IMR-90 (cell line): ENCODE measurements at regions of chr3 and their contacts with region 1.

Region 1: GRCh38 chr3:98901392-98902350 is at the start of gene DCBLD2:
- DNase-seq: peak; percentile 99
- ATAC-seq: peak; percentile 97
- H3K4me3 ChIP-seq: peak within 1 kb of the TSS; percentile 62
- H3K27ac ChIP-seq: peak within 1 kb of the TSS; percentile 94
- H3K4me1 ChIP-seq: peaks cover 2% of the 10 kb centered on the region; the same call in 1 of the 2 replicates
- H3K27me3 ChIP-seq: no peaks in the 10 kb centered on the region
- CTCF ChIP-seq: no peak
- POLR2A ChIP-seq: peak; percentile 93
- RAD21 ChIP-seq: no peak
- total RNA-seq, gene DCBLD2: 196 and 275 TPM in 2 replicates

Region 2: GRCh38 chr3:98602078-98602678 is 299.5 kb before region 1 on chr3:
- CTCF ChIA-PET with region 1: no interaction called
- POLR2A ChIA-PET with region 1: no interaction called
- dilution Hi-C with region 1: no loop called
- in situ Hi-C with region 1: no loop called
- intact Hi-C with region 1: loop called (anchors 10 kb)
- DNase-seq: peak; percentile 76
- ATAC-seq: peak; percentile 95
- H3K4me3 ChIP-seq: no peak overlapping the region
- H3K27ac ChIP-seq: no peak overlapping the region
- H3K4me1 ChIP-seq: peaks cover 2% of the 10 kb centered on the region; the same call in 1 of the 2 replicates
- H3K27me3 ChIP-seq: no peaks in the 10 kb centered on the region
- CTCF ChIP-seq: peak; percentile 84
- POLR2A ChIP-seq: no peak
- RAD21 ChIP-seq: peak; percentile 86

Region 3: GRCh38 chr3:98846101-98846500 is 55.6 kb before region 1 on chr3:
- CTCF ChIA-PET with region 1: no interaction called
- POLR2A ChIA-PET with region 1: no interaction called
- dilution Hi-C with region 1: no loop called
- in situ Hi-C with region 1: no loop called
- intact Hi-C with region 1: loop called (anchors 2 kb)
- DNase-seq: peak; percentile 37
- ATAC-seq: peak; percentile 59
- H3K4me3 ChIP-seq: no peak overlapping the region
- H3K27ac ChIP-seq: no peak overlapping the region
- H3K4me1 ChIP-seq: peaks cover 6% of the 10 kb centered on the region; the same call in 1 of the 2 replicates
- H3K27me3 ChIP-seq: no peaks in the 10 kb centered on the region
- CTCF ChIP-seq: no peak
- POLR2A ChIP-seq: no peak
- RAD21 ChIP-seq: no peak

Region 4: GRCh38 chr3:98977520-98977919 is 75.8 kb after region 1 on chr3:
- CTCF ChIA-PET with region 1: no interaction called
- POLR2A ChIA-PET with region 1: no interaction called
- dilution Hi-C with region 1: no loop called
- in situ Hi-C with region 1: loop called (anchors 5 kb)
- intact Hi-C with region 1: no loop called
- DNase-seq: peak; percentile 91
- ATAC-seq: peak; percentile 53
- H3K4me3 ChIP-seq: no peak overlapping the region
- H3K27ac ChIP-seq: no peak overlapping the region
- H3K4me1 ChIP-seq: no peaks in the 10 kb centered on the region; the same call in 1 of the 2 replicates
- H3K27me3 ChIP-seq: no peaks in the 10 kb centered on the region
- CTCF ChIP-seq: no peak
- POLR2A ChIP-seq: no peak
- RAD21 ChIP-seq: no peak

Region 5: DNA sequence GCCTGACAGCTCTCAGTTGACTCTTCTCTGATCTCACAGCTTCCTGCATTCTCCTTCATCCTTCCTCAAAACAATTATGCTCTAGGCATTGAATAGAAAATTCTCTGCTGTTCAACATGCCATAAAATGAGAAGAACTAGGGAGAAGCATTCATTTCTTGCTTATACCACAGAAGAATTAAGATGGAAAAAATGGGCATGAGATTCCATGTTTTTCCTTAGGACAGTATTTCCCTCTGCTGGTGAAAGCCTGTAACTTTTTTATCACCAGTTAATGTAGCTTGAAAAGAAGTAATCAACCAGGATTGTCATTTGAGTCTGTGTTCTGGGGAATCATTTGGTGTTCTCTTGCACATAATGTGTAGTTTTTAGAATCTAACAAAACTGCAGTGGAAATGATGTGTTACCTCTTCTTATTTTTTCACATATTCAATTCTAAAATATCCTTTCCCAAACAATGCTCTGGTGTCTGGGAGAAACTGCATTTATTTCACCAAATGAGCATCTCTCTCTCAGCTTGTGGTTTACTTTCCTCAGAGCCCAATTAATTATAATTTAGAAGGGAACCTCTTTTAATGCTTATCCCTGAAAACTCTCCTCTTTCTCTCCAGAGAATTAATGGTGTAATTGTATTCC is 92.6 kb after region 1 on chr3:
- CTCF ChIA-PET with region 1: interaction called, 3 read pairs
- POLR2A ChIA-PET with region 1: no interaction called
- dilution Hi-C with region 1: no loop called
- in situ Hi-C with region 1: no loop called
- intact Hi-C with region 1: loop called (anchors 2 kb)
- DNase-seq: peak; percentile 81
- ATAC-seq: peak; percentile 85
- H3K4me3 ChIP-seq: no peak overlapping the region
- H3K27ac ChIP-seq: no peak overlapping the region
- H3K4me1 ChIP-seq: no peaks in the 10 kb centered on the region
- H3K27me3 ChIP-seq: no peaks in the 10 kb centered on the region
- CTCF ChIP-seq: peak; percentile 85
- POLR2A ChIP-seq: 0 out of 2 replicates have a peak, but pooled peaks have one; percentile 24
- RAD21 ChIP-seq: peak; percentile 93